HepG2 (cell line): ENCODE measurements at regions of chr16 and their contacts with region 1.

Region 1: GRCh38 chr16:28950648-28951409 is at the start of gene NFATC2IP:
- DNase-seq: peak; percentile 100
- ATAC-seq: peak; percentile 97
- H3K4me3 ChIP-seq: peak within 1 kb of the TSS; percentile 93 to 99 (median 97)
- H3K27ac ChIP-seq: peak within 1 kb of the TSS; percentile 67
- H3K4me1 ChIP-seq: peaks cover 49% of the 10 kb centered on the region
- H3K27me3 ChIP-seq: no peaks in the 10 kb centered on the region; a peak in 1 of 5 replicates
- CTCF ChIP-seq: no peak
- EP300 ChIP-seq: no peak
- POLR2A ChIP-seq: peak; percentile 63 to 89
- RAD21 ChIP-seq: peak; percentile 28; the same call in 1 of the 2 replicates
- total RNA-seq, gene NFATC2IP: 18.2 and 32.1 TPM in 2 replicates

Region 2: DNA sequence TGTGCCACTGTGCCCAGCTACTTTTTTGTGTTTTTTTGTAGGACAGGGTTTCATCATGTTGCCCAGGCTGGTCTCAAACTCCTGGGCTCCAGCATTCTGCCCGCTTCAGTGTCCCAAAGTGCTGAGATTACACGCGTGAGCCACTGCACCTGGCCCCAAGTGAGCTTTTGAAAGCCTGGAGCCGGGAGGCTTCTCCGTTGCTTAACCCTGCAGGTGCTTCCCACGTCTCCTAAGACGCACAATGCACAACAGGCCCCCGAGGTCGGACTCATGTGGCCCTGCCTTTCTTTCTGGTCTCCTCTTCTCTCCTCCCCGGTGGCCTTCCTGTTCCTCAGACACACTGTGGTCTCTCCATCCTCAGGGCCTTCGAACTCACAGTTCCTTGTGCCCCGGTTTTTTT is 38.3 kb before region 1 on chr16:
- CTCF ChIA-PET with region 1: interaction called, 13 read pairs
- POLR2A ChIA-PET with region 1: no interaction called
- in situ Hi-C with region 1: no loop called
- intact Hi-C with region 1: no loop called
- DNase-seq: no peak
- ATAC-seq: no peak
- H3K4me3 ChIP-seq: no peak overlapping the region
- H3K27ac ChIP-seq: no peak overlapping the region
- H3K4me1 ChIP-seq: no peaks in the 10 kb centered on the region
- H3K27me3 ChIP-seq: no peaks in the 10 kb centered on the region
- CTCF ChIP-seq: no peak
- EP300 ChIP-seq: no peak
- POLR2A ChIP-seq: no peak
- RAD21 ChIP-seq: no peak

Region 3: GRCh38 chr16:28935924-28936783 is 14.7 kb before region 1 on chr16:
- CTCF ChIA-PET with region 1: interaction called, 7 read pairs
- POLR2A ChIA-PET with region 1: interaction called, 28 read pairs
- in situ Hi-C with region 1: no loop called
- intact Hi-C with region 1: no loop called
- DNase-seq: peak; percentile 88
- ATAC-seq: peak; percentile 93
- H3K4me3 ChIP-seq: peak overlapping the region; percentile 28 to 69 (median 40)
- H3K27ac ChIP-seq: peak overlapping the region; percentile 43
- H3K4me1 ChIP-seq: peaks cover 63% of the 10 kb centered on the region
- H3K27me3 ChIP-seq: no peaks in the 10 kb centered on the region
- CTCF ChIP-seq: peak; percentile 47
- EP300 ChIP-seq: no peak
- POLR2A ChIP-seq: peak; percentile 19 to 40; a peak in 1 of 4 replicates
- RAD21 ChIP-seq: no peak